PC-9 (cell line): ENCODE measurements at regions of chr9 and their contacts with region 1.

Region 1: GRCh38 chr9:21873540-21874221 is 71.2 kb downstream of the MTAP start:
- DNase-seq: peak in 1 of 2 experiments; percentile 70
- H3K4me3 ChIP-seq: no peak overlapping the region
- H3K27ac ChIP-seq: peak overlapping the region; percentile 12; the same call in 1 of the 2 replicates
- H3K4me1 ChIP-seq: peaks cover 17% of the 10 kb centered on the region
- H3K27me3 ChIP-seq: no peaks in the 10 kb centered on the region
- CTCF ChIP-seq: no peak

Region 2: DNA sequence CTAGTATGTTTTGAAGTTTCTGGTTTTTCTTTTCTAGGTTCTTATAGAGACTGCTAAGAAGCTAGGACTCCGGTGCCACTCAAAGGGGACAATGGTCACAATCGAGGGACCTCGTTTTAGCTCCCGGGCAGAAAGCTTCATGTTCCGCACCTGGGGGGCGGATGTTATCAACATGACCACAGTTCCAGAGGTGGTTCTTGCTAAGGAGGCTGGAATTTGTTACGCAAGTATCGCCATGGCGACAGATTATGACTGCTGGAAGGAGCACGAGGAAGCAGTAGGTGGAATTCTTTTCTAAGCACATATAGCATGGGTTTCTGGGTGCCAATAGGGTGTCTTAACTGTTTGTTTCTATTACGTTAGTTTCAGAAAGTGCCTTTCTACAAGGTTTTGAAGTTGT is 19.1 kb before region 1 on chr9:
- CTCF ChIA-PET with region 1: no interaction called
- POLR2A ChIA-PET with region 1: interaction called, 9 read pairs
- intact Hi-C with region 1: loop called (anchors 1 kb)
- DNase-seq: peak; percentile 82 to 92
- H3K4me3 ChIP-seq: peak overlapping the region; percentile 8; the same call in 1 of the 2 replicates
- H3K27ac ChIP-seq: peak overlapping the region; percentile 67
- H3K4me1 ChIP-seq: peaks cover 30% of the 10 kb centered on the region
- H3K27me3 ChIP-seq: no peaks in the 10 kb centered on the region
- CTCF ChIP-seq: no peak

Region 3: DNA sequence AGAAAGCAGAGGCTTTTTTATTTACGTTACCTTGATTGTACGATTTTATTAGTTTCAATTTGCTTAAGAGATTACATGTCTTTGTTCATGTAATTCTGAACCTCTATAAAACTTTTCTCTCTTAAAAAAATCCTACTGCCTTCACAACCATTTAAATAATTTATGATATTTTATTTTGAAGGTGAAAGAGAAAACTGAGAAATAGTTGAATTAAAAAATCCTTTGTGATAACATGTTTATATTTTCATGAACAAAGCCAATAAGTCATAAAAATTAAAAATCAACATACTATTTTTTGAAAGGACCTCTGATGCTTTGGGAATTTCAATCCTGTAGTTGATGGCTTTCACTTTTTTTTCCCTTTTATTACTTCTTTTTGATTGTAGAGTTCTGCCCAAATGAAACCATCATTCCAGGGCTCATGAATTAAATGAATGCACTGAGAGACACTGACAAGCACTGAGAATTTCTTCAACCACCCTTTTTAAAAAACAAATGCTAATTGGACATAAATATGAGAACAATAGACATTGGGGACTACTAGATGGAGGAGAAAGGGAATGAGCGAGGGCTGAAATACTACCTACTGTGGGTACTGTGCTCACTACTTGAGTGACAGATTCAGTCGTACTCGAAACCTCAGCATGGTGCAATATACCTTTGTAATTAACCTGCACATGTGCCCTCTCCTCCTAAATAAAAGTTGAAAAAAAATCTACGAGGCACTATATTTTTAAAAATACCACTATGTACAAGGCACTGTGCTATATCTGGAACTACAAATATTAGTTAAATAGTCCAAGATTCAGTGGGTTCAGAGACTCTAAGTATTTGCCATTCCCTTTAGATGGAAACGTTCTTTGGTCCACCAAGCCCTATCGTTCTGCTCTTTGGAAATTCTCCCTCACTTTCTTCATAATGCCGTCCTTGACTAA is 114.6 kb after region 1 on chr9:
- CTCF ChIA-PET with region 1: no interaction called
- POLR2A ChIA-PET with region 1: no interaction called
- intact Hi-C with region 1: no loop called
- DNase-seq: no peak
- H3K4me3 ChIP-seq: no peak overlapping the region; the same call in 1 of the 2 replicates
- H3K27ac ChIP-seq: peak overlapping the region; percentile 23; the same call in 1 of the 2 replicates
- H3K4me1 ChIP-seq: peaks cover 25% of the 10 kb centered on the region; the same call in 1 of the 2 replicates
- H3K27me3 ChIP-seq: no peaks in the 10 kb centered on the region
- CTCF ChIP-seq: no peak

Region 4: GRCh38 chr9:22060831-22061383 is 187.2 kb after region 1 on chr9:
- CTCF ChIA-PET with region 1: interaction called, 10 read pairs
- POLR2A ChIA-PET with region 1: no interaction called
- intact Hi-C with region 1: no loop called
- DNase-seq: no peak
- H3K4me3 ChIP-seq: no peak overlapping the region
- H3K27ac ChIP-seq: no peak overlapping the region
- H3K4me1 ChIP-seq: no peaks in the 10 kb centered on the region
- H3K27me3 ChIP-seq: no peaks in the 10 kb centered on the region
- CTCF ChIP-seq: no peak